Activated naive CD4-positive, alpha-beta T cell treated with anti-CD3 and anti-CD28 coated beads for 36 hours (primary cell): ENCODE measurements at regions of chr1 and their contacts with region 1.

Region 1: GRCh38 chr1:206106328-206107167 is 10.6 kb downstream of the AVPR1B start:
- DNase-seq: peak; percentile 92
- H3K4me3 Mint-ChIP-seq: no peak overlapping the region
- H3K27ac Mint-ChIP-seq: no peak overlapping the region
- H3K4me1 Mint-ChIP-seq: no peaks in the 10 kb centered on the region
- H3K27me3 Mint-ChIP-seq: peaks cover 2% of the 10 kb centered on the region

Region 2: GRCh38 chr1:205812878-205813754 is 293.4 kb before region 1 on chr1 and contains the start of gene SLC41A1:
- CTCF ChIA-PET with region 1: no interaction called
- intact Hi-C with region 1: no loop called
- DNase-seq: peak; percentile 95
- H3K4me3 Mint-ChIP-seq: peak within 1 kb of the TSS; percentile 89
- H3K27ac Mint-ChIP-seq: peak within 1 kb of the TSS; percentile 74
- H3K4me1 Mint-ChIP-seq: peaks cover 49% of the 10 kb centered on the region
- H3K27me3 Mint-ChIP-seq: no peaks in the 10 kb centered on the region
- total RNA-seq, gene SLC41A1: 32.1 to 33.9 TPM

Region 3: DNA sequence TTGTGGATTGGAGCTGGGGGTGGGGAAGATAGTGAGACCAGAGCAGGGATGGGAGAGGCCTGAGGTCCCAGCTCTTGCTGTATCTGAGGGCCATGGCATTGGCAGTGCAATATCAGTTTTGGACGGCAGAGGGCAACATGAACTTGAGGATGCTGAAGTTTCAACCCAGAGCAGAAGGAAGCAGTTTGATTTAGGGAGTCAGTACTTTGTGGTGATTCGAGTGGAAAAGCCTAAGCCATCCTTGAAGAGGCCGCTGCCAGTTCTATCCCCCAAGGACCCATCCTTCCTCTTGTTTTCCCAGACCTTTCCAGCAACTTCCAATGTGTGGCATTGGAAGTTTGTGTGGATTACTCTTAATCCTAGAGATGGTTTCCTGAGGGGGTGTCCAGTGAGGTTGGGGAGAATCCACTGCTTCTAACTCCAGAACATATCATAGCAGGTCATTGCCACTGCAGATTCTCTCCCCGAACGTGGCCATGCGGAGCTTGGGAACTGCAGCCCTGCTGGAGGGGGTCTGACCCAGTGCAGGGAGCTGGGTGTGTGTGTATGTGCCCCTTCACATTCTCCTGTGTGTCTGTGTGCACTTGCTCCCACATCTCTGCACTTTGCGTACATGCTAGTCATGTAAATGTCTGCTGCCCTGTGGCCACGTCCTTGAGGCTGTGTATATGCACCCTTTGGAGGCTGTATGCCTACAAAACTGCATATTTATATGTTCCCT is 187.4 kb before region 1 on chr1:
- CTCF ChIA-PET with region 1: interaction called, 18 read pairs
- intact Hi-C with region 1: loop called (anchors 1 kb)
- DNase-seq: peak; percentile 91
- H3K4me3 Mint-ChIP-seq: no peak overlapping the region
- H3K27ac Mint-ChIP-seq: no peak overlapping the region
- H3K4me1 Mint-ChIP-seq: no peaks in the 10 kb centered on the region
- H3K27me3 Mint-ChIP-seq: no peaks in the 10 kb centered on the region

Region 4: GRCh38 chr1:206030714-206031113 is 75.8 kb before region 1 on chr1:
- CTCF ChIA-PET with region 1: interaction called, 177 read pairs
- intact Hi-C with region 1: loop called (anchors 1 kb)
- DNase-seq: peak; percentile 86
- H3K4me3 Mint-ChIP-seq: no peak overlapping the region
- H3K27ac Mint-ChIP-seq: no peak overlapping the region
- H3K4me1 Mint-ChIP-seq: peaks cover 6% of the 10 kb centered on the region
- H3K27me3 Mint-ChIP-seq: peaks cover 18% of the 10 kb centered on the region

Region 5: DNA sequence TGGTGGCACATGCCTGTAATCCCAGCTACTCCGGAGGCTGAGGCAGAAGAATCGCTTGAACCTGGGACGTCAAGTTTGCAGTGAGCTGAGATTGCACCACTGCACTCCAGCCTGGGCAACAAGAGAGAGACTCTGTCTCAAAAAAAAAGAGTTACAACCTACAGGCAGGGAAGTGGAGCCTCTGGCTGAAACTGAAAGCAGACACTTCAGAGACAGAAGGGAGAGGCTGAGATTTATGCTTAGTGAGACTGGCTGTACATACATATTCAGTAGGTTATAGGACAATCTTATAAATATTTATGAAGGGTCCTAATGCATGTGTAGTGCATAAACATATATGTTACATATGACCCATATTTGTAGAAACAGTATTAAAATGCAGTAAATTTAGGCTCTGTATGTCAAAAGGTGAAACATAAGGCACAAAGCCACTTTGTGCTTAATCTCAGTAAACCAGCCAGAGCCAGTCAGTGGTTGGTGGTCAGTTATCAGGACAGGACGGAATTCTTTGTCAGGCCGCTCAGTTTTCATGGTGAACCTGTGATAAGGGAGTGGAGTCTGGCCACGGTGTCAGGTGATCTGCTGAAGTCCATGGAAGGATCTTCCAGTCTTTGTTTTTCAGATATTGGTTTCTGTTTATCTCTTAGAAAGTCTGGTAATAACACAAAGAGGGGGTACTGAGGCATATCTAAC is 39.9 kb before region 1 on chr1:
- CTCF ChIA-PET with region 1: interaction called, 6 read pairs
- intact Hi-C with region 1: loop called (anchors 5 kb)
- DNase-seq: peak; percentile 28
- H3K4me3 Mint-ChIP-seq: no peak overlapping the region
- H3K27ac Mint-ChIP-seq: no peak overlapping the region
- H3K4me1 Mint-ChIP-seq: peaks cover 16% of the 10 kb centered on the region
- H3K27me3 Mint-ChIP-seq: peaks cover 7% of the 10 kb centered on the region

Region 6: GRCh38 chr1:206143537-206144172 is 37.1 kb after region 1 on chr1:
- CTCF ChIA-PET with region 1: no interaction called
- intact Hi-C with region 1: no loop called
- DNase-seq: no peak
- H3K4me3 Mint-ChIP-seq: no peak overlapping the region
- H3K27ac Mint-ChIP-seq: no peak overlapping the region
- H3K4me1 Mint-ChIP-seq: no peaks in the 10 kb centered on the region
- H3K27me3 Mint-ChIP-seq: peaks cover 2% of the 10 kb centered on the region